Activated T-helper 1 cell treated with anti-CD3 and anti-CD28 coated beads, Interleukin-12 subunit alpha, Interleukin-12 subunit beta, Interleukin-2, Interleukin-4 antibody, amounts not matched to agents 30 ng/mL and 10 ng/mL and 1 ng/mL, durations not matched to agents 14 hours and 24 hours and 36 hours (primary cell): ENCODE measurements at regions of chr11 and their contacts with region 1.

Region 1: DNA sequence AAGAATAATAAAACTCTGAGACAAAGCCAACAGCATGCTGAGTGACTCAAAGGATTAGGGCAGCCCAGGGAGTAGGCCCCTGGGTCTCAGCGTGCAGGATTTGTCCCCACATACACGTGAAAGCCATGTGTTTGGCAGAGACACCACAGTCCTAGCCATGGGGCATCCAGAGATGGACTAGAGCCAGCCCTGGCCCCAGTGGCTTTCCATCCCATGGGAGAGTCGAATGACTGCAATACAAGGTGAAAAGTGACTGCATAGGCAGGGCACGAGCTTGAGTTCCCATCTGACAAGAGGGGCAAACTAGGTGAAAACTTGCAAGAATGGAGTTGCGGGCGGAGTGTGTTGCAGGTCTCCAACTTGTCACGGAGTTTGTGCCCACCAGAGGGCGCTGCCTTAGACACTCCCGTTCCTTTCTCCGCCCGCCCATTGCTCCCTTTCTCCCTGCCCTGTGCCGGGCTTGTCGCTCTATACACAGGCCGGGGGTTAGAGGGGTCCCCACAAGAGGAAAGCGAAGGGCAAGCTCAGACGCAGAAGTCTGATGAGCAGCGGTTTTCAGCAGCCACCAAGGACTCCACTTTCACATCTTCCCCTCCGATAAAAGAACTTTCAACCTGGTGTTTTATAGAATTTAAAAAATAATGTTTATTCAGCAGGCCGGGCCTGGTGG is 24.2 kb downstream of the TSKU start:
- DNase-seq: peak; percentile 38
- H3K4me3 Mint-ChIP-seq: no peak overlapping the region
- H3K27ac Mint-ChIP-seq: no peak overlapping the region
- H3K4me1 Mint-ChIP-seq: peaks cover 43% of the 10 kb centered on the region
- H3K27me3 Mint-ChIP-seq: peaks cover 18% of the 10 kb centered on the region

Region 2: DNA sequence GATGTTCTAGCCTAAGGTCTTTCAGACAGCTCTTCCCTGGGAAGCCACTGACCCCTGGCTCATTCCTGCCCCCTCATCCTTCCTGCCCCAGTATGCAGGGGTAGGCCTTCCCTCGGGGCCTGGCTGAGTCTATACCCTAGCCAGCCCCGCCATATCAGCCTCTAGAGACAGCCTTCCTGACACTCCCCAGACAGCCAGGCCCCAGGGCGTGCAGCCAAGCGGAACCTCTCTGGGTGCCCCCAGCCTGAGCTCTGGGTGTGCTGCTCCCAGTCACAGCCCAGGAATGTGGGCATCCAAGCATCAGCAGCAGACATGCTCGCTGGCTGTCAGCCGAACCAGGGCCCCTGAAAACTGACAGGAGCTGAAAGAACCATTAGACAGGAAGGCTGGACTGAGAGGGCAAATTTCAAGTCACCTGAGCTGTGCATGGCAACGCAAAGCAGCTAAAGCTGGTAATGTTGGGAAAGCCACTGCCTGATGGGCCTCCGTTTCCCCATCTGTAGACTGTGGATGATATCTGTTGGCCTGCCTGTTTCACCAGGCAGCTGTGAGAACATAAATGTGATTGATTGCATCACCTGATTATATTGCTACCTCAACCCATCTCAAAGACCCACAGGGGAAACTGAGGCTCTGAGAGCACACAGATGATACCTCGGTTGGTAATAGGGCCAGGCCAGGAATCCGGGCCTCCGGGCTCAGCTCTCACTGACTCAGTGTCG is 230.0 kb before region 1 on chr11:
- intact Hi-C with region 1: no loop called
- DNase-seq: no peak
- H3K4me3 Mint-ChIP-seq: no peak overlapping the region
- H3K27ac Mint-ChIP-seq: no peak overlapping the region
- H3K4me1 Mint-ChIP-seq: peaks cover 10% of the 10 kb centered on the region
- H3K27me3 Mint-ChIP-seq: peaks cover 5% of the 10 kb centered on the region

Region 3: GRCh38 chr11:76626921-76627401 is 180.4 kb before region 1 on chr11:
- intact Hi-C with region 1: loop called (anchors 10 kb)
- DNase-seq: peak; percentile 72
- H3K4me3 Mint-ChIP-seq: peak overlapping the region; percentile 20
- H3K27ac Mint-ChIP-seq: peak overlapping the region; percentile 92
- H3K4me1 Mint-ChIP-seq: peaks cover 44% of the 10 kb centered on the region
- H3K27me3 Mint-ChIP-seq: peaks cover 8% of the 10 kb centered on the region

Region 4: DNA sequence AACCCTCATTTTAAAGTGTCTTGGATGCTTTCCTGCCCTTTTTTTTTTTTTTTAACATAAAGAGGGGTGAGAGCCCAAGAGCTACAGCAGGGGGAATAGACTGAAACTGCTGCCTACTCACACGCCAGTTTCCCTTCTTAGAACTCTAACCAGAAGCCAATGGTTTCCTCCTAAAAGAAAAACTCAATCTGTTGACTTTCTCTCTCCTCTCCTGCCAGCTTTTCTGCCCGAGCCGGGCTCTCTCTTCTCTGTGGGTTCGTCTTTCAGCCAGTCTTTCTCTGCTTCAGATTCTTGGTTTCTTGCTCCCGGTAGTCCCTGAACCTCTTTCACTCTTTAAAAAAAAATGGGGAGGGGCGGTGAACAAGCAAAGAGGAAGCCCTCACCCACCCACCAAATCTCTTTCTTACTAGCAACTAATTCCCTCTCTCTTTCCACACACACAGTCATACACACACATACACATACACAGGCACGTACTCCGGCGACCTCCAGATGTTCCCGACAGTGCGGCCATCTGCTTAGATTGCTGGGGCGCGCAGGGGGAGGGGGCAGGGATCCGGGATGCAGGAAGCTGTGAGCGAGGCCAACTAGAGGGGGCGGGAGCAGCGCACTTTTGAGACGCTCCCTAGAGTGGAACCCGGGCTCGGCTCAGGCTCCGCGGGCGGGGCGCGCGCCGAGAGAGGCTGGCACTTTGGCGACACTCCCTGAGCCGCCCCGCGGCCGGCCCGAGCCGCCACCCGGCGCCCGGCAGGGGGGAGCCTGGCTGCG is 24.6 kb before region 1 on chr11:
- intact Hi-C with region 1: loop called (anchors 1 kb)
- DNase-seq: peak; percentile 35
- H3K4me3 Mint-ChIP-seq: peak overlapping the region; percentile 73
- H3K27ac Mint-ChIP-seq: peak overlapping the region; percentile 78
- H3K4me1 Mint-ChIP-seq: peaks cover 9% of the 10 kb centered on the region
- H3K27me3 Mint-ChIP-seq: peaks cover 40% of the 10 kb centered on the region

Region 5: GRCh38 chr11:76835928-76836612 is 28.7 kb after region 1 on chr11:
- intact Hi-C with region 1: no loop called
- DNase-seq: no peak
- H3K4me3 Mint-ChIP-seq: no peak overlapping the region
- H3K27ac Mint-ChIP-seq: no peak overlapping the region
- H3K4me1 Mint-ChIP-seq: no peaks in the 10 kb centered on the region
- H3K27me3 Mint-ChIP-seq: peaks cover 18% of the 10 kb centered on the region

Region 6: DNA sequence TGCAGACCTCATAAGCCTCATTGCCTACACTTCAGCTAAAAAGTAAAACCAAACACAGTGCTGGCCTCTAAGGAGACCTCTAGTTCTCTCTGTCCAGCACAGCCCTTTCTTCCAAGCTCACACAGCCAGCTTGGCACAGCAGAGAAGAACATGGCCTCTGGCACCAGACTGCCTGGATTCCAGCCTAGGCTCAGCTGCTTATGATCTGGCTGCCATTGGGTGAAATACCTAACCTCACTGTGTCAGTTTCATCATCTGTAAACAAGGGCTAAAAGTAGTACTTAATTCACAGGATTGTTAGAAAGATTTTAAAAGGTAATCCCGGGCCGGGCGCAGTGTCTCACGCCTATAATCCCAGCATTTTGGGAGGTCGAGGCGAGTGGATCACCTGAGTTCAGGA is 43.5 kb after region 1 on chr11:
- intact Hi-C with region 1: no loop called
- DNase-seq: no peak
- H3K4me3 Mint-ChIP-seq: no peak overlapping the region
- H3K27ac Mint-ChIP-seq: no peak overlapping the region
- H3K4me1 Mint-ChIP-seq: no peaks in the 10 kb centered on the region
- H3K27me3 Mint-ChIP-seq: peaks cover 13% of the 10 kb centered on the region

Region 7: GRCh38 chr11:76919887-76920746 is 112.8 kb after region 1 on chr11:
- intact Hi-C with region 1: loop called (anchors 1 kb)
- DNase-seq: peak; percentile 51
- H3K4me3 Mint-ChIP-seq: no peak overlapping the region
- H3K27ac Mint-ChIP-seq: no peak overlapping the region
- H3K4me1 Mint-ChIP-seq: peaks cover 14% of the 10 kb centered on the region
- H3K27me3 Mint-ChIP-seq: peaks cover 2% of the 10 kb centered on the region

Region 8: GRCh38 chr11:77487790-77488189 is 680.4 kb after region 1 on chr11:
- intact Hi-C with region 1: no loop called
- DNase-seq: no peak
- H3K4me3 Mint-ChIP-seq: no peak overlapping the region
- H3K27ac Mint-ChIP-seq: no peak overlapping the region
- H3K4me1 Mint-ChIP-seq: no peaks in the 10 kb centered on the region
- H3K27me3 Mint-ChIP-seq: peaks cover 11% of the 10 kb centered on the region